ENCODE measurements at regions of chr17 and their contacts with region 1.

Region 1: GRCh38 chr17:44533533-44534246 is 23.6 kb upstream of the FZD2 start:
- DNase-seq: peak; percentile 77
- ATAC-seq: peak; percentile 94
- H3K4me3 ChIP-seq: no peak overlapping the region
- H3K27ac ChIP-seq: peak overlapping the region; percentile 15; the same call in 1 of the 2 replicates
- H3K4me1 ChIP-seq: peaks cover 6 to 32% of the 10 kb centered on the region in 2 experiments; a peak in 3 of 4 replicates
- H3K27me3 ChIP-seq: no peaks in the 10 kb centered on the region
- CTCF ChIP-seq: peak; percentile 91 to 99 (median 94)
- POLR2A ChIP-seq: no peak
- RAD21 ChIP-seq: peak; percentile 98

Region 2: DNA sequence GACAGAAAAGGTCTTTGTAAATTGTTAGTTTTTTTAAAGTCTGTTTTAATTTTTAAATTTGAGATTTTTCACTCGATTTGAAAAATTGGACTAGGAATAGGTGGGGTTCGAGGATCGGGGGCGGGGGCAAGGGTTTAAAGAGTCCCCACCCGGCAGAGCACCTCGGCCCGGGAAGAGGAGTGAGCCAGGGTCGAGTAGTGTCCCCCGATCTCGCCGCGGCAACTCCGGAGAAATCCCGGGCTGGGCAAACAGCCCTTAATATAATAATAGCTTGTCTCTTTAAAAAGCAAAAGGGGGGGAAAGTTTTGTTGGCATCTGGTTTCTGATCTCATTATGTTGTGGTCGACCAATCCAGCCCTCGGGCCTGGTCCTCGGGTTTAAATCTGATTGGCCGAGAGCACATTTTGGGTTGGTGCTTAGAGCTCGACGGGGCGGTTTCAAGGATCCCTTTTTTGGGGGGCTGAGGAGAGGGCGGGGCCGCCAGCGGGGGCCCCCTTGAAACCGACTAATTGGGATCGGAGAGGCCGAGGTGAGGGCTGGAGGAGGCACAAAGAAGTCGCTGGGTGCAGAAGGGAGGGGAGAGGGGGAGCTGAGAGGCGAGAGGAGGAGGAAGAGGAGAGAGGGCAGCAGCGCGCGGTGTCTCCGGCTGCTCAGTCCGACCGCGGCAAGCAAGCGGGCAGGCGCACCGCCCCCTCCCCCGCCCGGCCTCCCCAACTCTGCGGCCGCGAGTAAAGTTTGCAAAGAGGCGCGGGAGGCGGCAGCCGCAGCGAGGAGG is 23.3 kb after region 1 on chr17 and contains the start of gene FZD2:
- CTCF ChIA-PET with region 1: interaction called, 3 read pairs
- POLR2A ChIA-PET with region 1: no interaction called
- RAD21 ChIA-PET with region 1: no interaction called
- intact Hi-C with region 1: loop called (anchors 1 kb)
- DNase-seq: peak; percentile 91
- ATAC-seq: peak; percentile 91
- H3K4me3 ChIP-seq: peak within 1 kb of the TSS; percentile 68 to 71
- H3K27ac ChIP-seq: peak within 1 kb of the TSS; percentile 62
- H3K4me1 ChIP-seq: peaks cover 3 to 14% of the 10 kb centered on the region in 2 experiments; a peak in 3 of 4 replicates
- H3K27me3 ChIP-seq: no peaks in the 10 kb centered on the region
- CTCF ChIP-seq: no peak
- POLR2A ChIP-seq: no peak
- RAD21 ChIP-seq: no peak
- total RNA-seq, gene FZD2: 12.8 TPM

Region 3: GRCh38 chr17:44636562-44636961 is 102.9 kb after region 1 on chr17:
- CTCF ChIA-PET with region 1: interaction called, 32 read pairs
- POLR2A ChIA-PET with region 1: no interaction called
- RAD21 ChIA-PET with region 1: no interaction called
- intact Hi-C with region 1: loop called (anchors 1 kb)
- DNase-seq: peak; percentile 13
- ATAC-seq: 0 out of 2 replicates have a peak, but pooled peaks have one; percentile 47
- H3K4me3 ChIP-seq: no peak overlapping the region
- H3K27ac ChIP-seq: no peak overlapping the region
- H3K4me1 ChIP-seq: no peaks in the 10 kb centered on the region
- H3K27me3 ChIP-seq: no peaks in the 10 kb centered on the region
- CTCF ChIP-seq: peak; percentile 4 to 55 (median 36); a peak in 2 of 6 replicates
- POLR2A ChIP-seq: no peak
- RAD21 ChIP-seq: peak; percentile 75

Region 4: DNA sequence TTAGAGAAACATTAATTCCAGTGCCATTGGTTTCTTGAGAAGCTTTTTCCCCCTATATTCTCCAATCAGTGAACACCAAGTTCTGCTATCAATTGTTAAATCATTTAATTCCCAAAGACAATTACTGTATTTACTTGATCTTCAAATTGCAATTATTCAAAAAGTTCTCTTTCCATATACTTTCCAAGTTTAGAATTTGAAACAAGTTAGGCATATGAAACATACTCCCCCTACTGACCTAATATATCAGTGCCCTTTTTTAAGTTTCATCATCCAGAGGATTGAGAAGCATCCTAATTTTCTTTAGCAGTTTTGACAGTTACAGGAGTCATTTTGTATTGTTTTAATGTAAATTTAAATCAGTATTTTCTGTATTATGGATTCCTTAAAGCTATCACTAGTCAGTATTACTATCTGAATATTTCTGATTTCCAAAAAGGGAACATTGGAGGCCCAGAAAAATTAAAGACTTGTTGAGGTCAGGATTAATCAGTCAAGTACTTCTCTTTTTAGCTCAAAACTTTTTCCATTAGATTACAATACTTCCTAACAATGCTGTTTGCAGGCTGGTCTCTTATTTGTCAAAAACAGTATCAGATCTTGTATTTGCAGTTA is 138.9 kb after region 1 on chr17:
- CTCF ChIA-PET with region 1: interaction called, 8 read pairs
- POLR2A ChIA-PET with region 1: no interaction called
- RAD21 ChIA-PET with region 1: interaction called in 1 of 2 experiments, 5 read pairs
- intact Hi-C with region 1: loop called (anchors 1 kb)
- DNase-seq: peak; percentile 18
- ATAC-seq: no peak
- H3K4me3 ChIP-seq: no peak overlapping the region
- H3K27ac ChIP-seq: no peak overlapping the region
- H3K4me1 ChIP-seq: peaks cover 0 to 5% of the 10 kb centered on the region in 2 experiments; a peak in 1 of 4 replicates
- H3K27me3 ChIP-seq: no peaks in the 10 kb centered on the region
- CTCF ChIP-seq: peak; percentile 67 to 73 (median 69); a peak in 5 of 6 replicates
- POLR2A ChIP-seq: no peak
- RAD21 ChIP-seq: peak; percentile 66

Measured in HCT116 (cell line).